ENCODE measurements at regions of chr3 and their contacts with region 1.

Region 1: DNA sequence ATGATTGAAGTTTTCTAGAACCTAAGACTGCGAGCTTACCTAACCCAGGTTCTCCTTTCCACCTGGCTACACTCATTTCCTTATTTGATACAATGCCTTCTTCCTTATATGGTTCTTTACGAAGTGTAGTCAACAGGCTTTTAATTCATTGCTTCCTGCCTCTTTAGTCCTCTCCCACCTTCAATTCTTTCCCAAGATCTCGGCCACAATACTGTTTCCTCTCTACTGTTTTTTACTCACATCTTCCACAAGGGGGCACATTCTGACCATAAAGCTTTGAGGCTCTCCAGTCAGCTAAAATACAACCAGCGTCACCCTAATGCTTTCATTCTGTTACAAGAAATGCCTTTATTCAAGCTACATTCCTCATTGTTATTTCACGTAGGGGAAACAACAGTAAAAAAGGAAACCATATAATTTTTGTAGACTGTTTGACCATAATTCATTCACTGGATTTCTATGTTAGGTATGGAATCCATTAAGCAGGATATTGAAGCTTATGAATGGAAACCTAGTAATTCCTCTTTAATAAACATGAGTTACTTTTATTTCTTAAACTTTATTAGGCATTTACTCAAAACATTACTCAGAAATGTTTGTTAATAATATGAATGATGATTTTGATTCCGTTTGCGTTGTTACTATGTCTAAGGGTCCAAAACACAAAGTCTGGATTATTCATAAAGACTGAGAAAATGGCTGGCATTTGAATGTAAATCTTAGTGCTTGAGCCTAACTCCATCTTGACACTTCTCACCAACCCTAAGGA is 29.5 kb upstream of the VEPH1 start:
- DNase-seq: peak; percentile 58
- H3K4me3 ChIP-seq: peak overlapping the region; percentile 28
- H3K27me3 ChIP-seq: no peaks in the 10 kb centered on the region
- CTCF ChIP-seq: peak; percentile 73

Region 2: DNA sequence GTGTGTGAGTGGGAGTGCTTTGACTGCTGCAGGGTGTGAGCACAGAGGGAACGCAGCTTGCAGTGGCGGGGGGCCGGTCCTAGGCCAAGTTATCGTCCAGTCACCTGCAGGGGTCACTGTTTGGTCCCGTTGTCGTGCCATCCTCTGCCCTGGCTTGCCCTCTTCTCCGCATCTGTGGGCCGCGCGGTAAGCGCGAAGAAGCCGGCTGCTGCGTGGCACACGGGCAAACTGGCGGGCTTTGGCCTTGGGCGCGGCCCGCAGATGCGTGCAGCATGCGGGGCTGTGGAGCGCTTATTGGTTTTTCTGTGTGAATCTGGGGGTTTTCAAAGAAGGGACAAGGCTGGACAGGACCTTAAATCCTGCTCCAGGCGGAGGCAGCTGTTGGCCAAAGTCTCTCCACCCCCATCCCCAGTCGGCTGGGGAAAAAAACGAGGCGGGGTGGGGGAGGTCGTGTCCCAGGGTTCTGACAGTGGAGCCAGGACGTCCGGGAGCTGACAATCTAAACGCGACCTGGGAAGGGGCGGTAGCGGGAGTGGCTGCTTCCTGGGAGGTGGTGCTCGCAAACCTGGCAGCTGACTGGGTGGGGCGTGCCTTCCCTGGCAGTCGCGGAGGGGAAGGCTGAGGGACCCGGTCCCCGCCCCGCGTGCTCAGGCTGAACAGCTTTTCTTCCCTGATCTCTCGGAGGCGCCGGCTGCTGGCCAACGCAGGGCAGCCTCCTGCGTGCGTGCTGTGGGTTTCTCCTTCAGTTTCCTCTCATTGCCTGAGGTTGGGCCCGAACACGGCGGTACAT is 10.2 kb after region 1 on chr3:
- CTCF ChIA-PET with region 1: interaction called, 70 read pairs
- POLR2A ChIA-PET with region 1: interaction called, 3 read pairs
- DNase-seq: no peak
- H3K4me3 ChIP-seq: peak overlapping the region; percentile 49
- H3K27me3 ChIP-seq: no peaks in the 10 kb centered on the region; the same call in 1 of the 2 replicates
- CTCF ChIP-seq: peak; percentile 55

Region 3: DNA sequence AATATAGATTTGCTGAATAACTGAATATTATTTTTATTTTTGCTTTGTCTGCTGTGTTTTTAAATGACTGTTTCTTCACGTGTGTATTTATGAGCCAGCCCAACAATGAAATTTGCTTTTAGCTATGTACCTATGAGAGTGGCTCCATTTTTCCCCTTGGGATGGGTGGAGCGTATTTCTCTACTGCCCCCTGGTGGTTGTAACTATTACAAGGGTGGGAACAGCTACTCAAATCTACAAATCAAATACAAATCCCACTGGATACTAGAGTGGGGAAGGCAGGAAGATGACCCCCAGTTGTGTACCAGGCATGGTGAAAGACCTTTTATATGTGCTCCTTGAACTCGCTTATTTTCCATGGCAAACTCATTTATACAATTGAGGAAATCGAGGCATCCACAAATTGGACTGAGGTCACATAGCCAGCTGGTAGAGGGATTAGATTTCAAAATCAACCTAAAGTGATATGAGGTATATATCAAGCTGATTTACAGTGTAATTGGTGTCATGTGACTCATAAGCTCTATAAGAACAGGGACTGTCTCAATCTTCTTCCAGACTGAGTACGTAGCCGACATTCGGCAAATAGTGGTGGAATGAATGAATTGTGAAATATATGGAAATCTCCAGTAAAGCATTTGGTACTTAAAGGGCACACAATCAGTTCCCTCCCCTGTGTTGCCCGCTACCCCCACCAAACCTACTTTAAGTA is 40.0 kb after region 1 on chr3:
- CTCF ChIA-PET with region 1: interaction called, 87 read pairs
- POLR2A ChIA-PET with region 1: interaction called, 5 read pairs
- DNase-seq: no peak
- H3K4me3 ChIP-seq: no peak overlapping the region
- H3K27me3 ChIP-seq: no peaks in the 10 kb centered on the region
- CTCF ChIP-seq: peak; percentile 73

Region 4: DNA sequence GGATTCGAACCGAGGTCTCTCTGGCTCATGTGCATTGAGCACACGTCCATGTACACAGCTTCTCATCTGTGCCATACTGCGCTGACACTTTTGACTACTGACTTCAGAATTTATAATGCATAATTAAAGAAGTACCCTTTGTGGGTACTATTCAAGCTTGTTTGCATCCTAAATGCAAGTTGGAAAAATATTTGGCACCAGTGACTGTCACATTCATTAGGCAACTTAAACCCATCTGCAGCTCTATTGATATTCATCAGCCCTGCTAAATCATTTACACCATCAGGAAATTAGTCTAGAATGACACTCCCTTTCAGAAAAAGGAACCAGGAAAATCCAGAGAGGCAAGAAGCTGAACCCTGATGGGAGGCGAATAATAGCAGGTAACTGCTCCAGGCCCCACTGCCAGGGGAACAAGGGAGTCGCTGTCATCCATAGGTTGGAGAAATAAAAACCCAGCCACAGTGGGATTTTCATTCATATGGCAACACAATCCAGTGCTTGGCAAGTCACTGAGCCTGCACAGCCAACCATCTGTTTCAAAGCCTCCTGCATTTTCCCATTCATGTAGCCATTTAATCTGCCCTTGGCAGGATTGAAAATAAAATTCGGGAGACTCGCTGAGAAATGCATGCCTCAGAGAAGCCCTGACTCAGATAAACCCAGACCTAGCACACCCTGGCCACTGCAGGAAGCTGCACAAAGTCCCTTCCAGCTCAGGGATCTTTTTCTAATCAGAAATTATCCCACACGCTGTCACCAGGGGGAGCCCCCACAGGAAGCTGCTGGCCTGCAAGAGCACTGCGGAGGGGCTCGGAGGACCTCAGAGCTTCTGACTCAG is 73.5 kb after region 1 on chr3:
- CTCF ChIA-PET with region 1: interaction called, 22 read pairs
- POLR2A ChIA-PET with region 1: no interaction called
- DNase-seq: no peak
- H3K4me3 ChIP-seq: no peak overlapping the region
- H3K27me3 ChIP-seq: no peaks in the 10 kb centered on the region; the same call in 1 of the 2 replicates
- CTCF ChIP-seq: peak; percentile 90

Region 5: GRCh38 chr3:157700408-157700807 is 167.7 kb after region 1 on chr3:
- CTCF ChIA-PET with region 1: no interaction called
- POLR2A ChIA-PET with region 1: interaction called, 13 read pairs
- DNase-seq: no peak
- H3K4me3 ChIP-seq: no peak overlapping the region
- H3K27me3 ChIP-seq: no peaks in the 10 kb centered on the region
- CTCF ChIP-seq: no peak

Region 6: DNA sequence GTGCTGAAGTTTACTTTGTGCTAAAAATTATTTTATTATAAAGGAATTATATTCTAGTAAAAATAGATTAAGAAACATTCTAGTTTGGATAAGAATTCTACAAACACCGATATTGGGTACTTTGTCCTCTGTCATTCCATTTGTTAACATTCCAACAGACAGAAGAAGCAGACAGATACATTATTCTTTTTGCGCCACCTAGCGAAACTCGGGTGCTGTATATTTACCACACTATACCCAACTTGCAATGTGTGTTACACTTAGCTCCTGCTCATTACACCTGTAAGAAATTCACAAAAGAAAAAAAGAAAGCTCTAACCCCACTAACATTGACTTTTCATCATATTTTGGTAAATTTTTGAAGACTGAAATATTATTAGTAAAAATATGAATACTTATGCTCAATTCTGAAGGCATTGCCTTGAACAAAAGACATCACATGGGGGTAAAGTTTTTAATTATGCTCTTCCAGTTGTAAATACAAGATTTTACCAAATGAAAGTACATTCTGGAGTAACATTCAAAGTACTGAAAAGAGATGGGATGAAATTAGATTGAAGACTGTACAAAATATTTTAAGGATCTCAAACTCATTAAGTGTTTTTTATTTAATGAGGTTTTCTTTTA is 901.8 kb after region 1 on chr3:
- CTCF ChIA-PET with region 1: interaction called, 16 read pairs
- POLR2A ChIA-PET with region 1: no interaction called
- DNase-seq: peak; percentile 16
- H3K4me3 ChIP-seq: no peak overlapping the region
- H3K27me3 ChIP-seq: no peaks in the 10 kb centered on the region
- CTCF ChIP-seq: peak; percentile 74

Measured in BJ (cell line).